Sigmoid colon (tissue), 7 donors: ENCODE measurements at regions of chr1 and their contacts with region 1.

Region 1: GRCh38 chr1:44819608-44820327 is 11.4 kb downstream of the BTBD19 start:
- DNase-seq: peak; percentile 92
- H3K4me3 ChIP-seq: peak overlapping the region; percentile 51 to 65 (median 59)
- H3K27ac ChIP-seq: peak overlapping the region; percentile 87 to 91 (median 90)
- H3K4me1 ChIP-seq: peaks cover 0 to 25% (median 19%) of the 10 kb centered on the region in 4 donors
- H3K27me3 ChIP-seq: no peaks in the 10 kb centered on the region
- CTCF ChIP-seq: no peak
- EP300 ChIP-seq: no peak
- POLR2A ChIP-seq: peak; percentile 84 to 96

Region 2: GRCh38 chr1:44655609-44656008 is 164.2 kb before region 1 on chr1:
- intact Hi-C with region 1: no loop called
- DNase-seq: no peak
- H3K4me3 ChIP-seq: no peak overlapping the region
- H3K27ac ChIP-seq: no peak overlapping the region
- H3K4me1 ChIP-seq: peaks cover 0 to 14% (median 4%) of the 10 kb centered on the region in 4 donors
- H3K27me3 ChIP-seq: no peaks in the 10 kb centered on the region
- CTCF ChIP-seq: peak in 3 of 4 experiments; percentile 41 to 54 (median 47)
- EP300 ChIP-seq: no peak
- POLR2A ChIP-seq: no peak

Region 3: DNA sequence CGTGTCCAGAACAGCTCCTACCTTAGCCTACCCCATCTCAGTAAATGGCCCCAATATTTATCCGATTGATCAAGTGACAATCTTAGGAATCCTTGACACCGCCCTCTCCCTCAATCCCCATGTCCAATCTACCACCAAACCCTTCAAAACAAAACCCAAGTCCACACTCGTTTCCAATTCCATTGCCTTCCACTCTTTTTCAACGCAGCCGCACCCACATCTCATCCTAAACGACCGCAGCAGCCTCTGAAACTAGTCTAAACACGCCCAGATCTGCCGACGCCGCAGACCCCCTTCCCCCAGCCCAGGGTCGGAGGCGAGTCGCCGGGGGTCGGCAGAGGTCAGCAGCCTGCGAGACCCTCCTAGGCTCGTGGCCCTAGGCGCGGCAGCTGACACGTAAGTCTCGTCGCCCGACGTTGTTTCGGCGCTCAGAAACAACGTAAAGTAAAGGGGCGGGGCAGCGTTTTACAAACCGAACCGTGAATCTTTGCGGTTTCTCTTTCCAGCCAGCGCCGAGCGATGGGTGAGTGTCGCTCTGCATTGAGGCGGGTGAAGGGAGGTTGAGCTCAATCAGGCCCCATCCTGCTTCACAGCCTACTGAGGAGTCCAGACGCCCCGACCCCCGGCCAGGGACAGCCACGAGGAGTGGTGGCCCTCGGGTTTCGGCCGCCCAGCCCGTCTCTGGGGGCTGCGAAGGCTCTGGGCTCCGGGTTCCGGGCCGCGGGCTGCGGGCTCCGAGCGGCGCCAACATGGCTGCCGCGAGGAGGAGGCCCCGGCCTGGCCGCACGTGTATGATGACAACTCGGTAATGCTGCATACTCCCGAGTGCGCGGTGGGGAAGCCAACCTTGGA is 44.5 kb before region 1 on chr1 and contains the start of gene RPS8:
- intact Hi-C with region 1: no loop called
- DNase-seq: peak; percentile 96
- H3K4me3 ChIP-seq: peak within 1 kb of the TSS; percentile 74 to 91 (median 81)
- H3K27ac ChIP-seq: peak within 1 kb of the TSS; percentile 98 to 99 (median 98)
- H3K4me1 ChIP-seq: peaks cover 0 to 37% (median 26%) of the 10 kb centered on the region in 4 donors
- H3K27me3 ChIP-seq: no peaks in the 10 kb centered on the region
- CTCF ChIP-seq: no peak
- EP300 ChIP-seq: peak in 2 of 4 donors; percentile 23 to 74
- POLR2A ChIP-seq: peak; percentile 94 to 97
- total RNA-seq, gene RPS8: 2,554 to 3,717 (median 3,009) TPM

Region 4: DNA sequence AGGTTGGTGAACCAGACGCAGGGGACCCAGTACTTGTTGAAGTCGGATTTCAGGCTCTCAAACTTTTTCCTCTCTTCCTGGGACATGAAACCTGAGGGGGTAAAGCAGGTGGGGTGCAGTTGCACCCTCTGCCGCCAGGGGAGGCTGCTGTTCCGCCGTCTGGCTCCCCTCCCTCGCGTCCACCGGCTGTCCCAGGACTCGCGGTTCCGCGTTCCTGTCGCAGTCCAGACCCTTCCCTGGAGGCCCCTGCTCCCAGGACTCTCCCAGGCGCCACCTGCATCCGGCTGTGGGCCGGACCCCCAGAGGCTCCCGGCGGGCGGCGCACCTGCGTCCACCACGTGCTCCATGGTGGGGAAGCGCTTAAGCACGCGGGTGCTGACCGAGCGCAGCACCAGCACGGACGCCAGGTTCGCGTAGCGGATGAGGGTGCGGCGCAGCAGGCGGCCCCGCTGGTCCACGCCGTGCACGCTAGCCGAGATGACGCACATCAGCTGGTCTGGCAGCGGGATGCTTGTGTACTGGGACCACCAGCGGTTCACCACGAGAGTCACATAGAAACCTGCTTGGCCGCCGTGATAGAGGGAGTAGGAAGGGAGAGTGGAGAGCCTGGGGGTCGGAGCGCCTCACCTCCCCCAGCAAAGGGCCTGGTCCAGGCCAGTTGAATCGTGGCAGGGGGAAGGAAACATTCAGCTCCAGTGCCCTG is 33.5 kb before region 1 on chr1:
- intact Hi-C with region 1: loop called (anchors 5 kb)
- DNase-seq: peak; percentile 87
- H3K4me3 ChIP-seq: peak overlapping the region; percentile 34 to 61 (median 50)
- H3K27ac ChIP-seq: peak overlapping the region; percentile 41 to 70 (median 64)
- H3K4me1 ChIP-seq: peaks cover 0 to 34% (median 25%) of the 10 kb centered on the region in 4 donors
- H3K27me3 ChIP-seq: no peaks in the 10 kb centered on the region
- CTCF ChIP-seq: peak; percentile 96 to 100 (median 98)
- EP300 ChIP-seq: no peak
- POLR2A ChIP-seq: no peak

Region 5: GRCh38 chr1:44799770-44800584 is 19.8 kb before region 1 on chr1 and contains the start of gene PLK3:
- intact Hi-C with region 1: loop called (anchors 2 kb)
- DNase-seq: peak; percentile 99
- H3K4me3 ChIP-seq: peak within 1 kb of the TSS; percentile 37 to 87 (median 74)
- H3K27ac ChIP-seq: peak within 1 kb of the TSS; percentile 90 to 95 (median 92)
- H3K4me1 ChIP-seq: peaks cover 5 to 41% (median 19%) of the 10 kb centered on the region in 4 donors
- H3K27me3 ChIP-seq: no peaks in the 10 kb centered on the region
- CTCF ChIP-seq: peak; percentile 75 to 90 (median 85)
- EP300 ChIP-seq: no peak
- POLR2A ChIP-seq: peak; percentile 30 to 83
- total RNA-seq, gene PLK3: 8.2 to 28.1 (median 11.0) TPM

Region 6: DNA sequence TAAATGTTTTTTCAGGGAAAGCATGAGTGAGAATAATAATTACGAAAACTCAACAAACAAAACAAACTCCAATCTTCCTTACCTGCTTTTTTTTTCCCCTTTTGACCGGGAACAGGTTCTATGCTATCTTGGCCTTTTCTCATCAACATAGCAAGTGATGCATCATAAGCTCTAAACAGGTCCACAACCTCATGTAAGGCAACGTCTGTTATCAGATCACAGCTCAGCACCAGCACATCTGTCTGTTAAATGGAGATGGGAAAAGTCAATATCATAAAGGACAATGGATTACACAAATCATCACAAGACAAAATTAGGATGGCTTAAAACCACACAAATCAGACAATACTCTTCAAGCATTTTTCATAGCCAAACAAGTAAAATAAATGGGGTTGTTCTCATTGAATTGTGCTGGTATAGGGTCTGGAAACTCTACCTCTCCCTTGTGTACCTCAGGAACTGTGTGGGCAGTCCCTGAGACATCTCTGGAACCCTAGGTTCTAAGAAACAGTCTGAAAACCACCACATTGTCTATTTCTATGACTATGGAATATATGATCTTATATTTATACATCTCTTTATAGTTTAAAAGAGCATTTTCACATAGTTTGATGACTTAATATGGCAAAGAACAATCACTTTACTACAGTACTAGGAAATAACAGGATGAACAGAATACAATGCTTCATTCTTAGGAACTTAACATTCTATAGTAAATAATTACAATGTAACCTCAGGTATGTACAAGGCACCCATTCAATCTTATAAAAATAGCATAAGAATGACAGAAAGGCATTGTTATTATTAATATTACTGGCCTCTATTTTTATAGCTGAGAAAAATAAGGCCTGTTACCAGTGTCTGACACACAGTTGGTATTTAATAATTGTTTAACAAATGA is 121.9 kb after region 1 on chr1:
- intact Hi-C with region 1: no loop called
- DNase-seq: no peak
- H3K4me3 ChIP-seq: no peak overlapping the region
- H3K27ac ChIP-seq: no peak overlapping the region
- H3K4me1 ChIP-seq: peaks cover 0 to 12% (median 8%) of the 10 kb centered on the region in 4 donors
- H3K27me3 ChIP-seq: no peaks in the 10 kb centered on the region
- CTCF ChIP-seq: no peak
- EP300 ChIP-seq: no peak
- POLR2A ChIP-seq: no peak